ENCODE measurements at regions of chr4 and their contacts with region 1.

Region 1: GRCh38 chr4:145732895-145733880 is 53.2 kb downstream of the C4orf51 start:
- DNase-seq: peak; percentile 93 to 94
- ATAC-seq: peak; percentile 40 to 44
- H3K4me3 ChIP-seq: peak overlapping the region; percentile 62 to 75 (median 70)
- H3K27ac ChIP-seq: peak overlapping the region; percentile 92 to 98 (median 96)
- H3K4me1 ChIP-seq: peaks cover 52 to 58% of the 10 kb centered on the region in 2 donors
- H3K27me3 ChIP-seq: no peaks in the 10 kb centered on the region
- CTCF ChIP-seq: peak in 1 of 5 experiments; percentile 26
- POLR2A ChIP-seq: peak; percentile 84 to 87

Region 2: DNA sequence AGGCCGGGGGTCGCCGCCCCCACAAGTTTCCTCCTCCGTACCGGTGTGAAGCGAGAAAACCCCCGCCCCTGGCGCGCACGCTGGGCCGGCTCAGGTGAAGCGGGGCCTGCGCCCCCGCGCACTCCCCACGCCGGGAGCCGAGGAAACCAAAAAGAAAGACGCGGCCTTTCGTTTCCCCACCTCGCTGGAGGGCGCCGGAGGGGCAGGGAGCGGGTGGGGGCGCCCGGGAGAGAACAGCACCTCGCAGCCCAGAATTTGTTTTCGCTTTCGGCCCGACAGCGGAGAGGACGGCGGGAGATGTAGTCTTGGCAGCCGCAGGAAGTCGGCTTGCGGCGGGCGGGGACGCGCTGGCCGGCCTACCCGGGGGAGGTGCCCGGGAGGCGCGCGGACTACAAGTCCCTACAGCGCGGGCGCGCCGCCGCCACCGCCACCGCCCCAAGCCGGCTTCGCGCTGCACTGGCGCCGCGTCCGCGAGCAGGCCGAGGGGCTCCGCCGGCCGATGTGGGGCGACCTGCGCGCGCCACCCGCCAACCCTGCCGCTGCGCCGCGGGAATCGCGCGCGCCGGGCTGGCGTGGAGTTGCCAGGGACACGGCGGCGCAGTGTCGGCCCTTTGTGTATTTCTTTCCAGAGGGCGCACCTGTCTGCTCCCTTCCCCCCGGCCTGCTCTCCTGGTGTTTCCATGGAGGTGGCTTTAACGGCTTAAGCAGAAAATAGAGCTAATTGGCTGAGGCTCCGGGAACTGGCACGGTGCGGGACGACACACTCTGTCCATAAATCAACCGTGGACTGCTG is 552.7 kb before region 1 on chr4 and contains the start of gene OTUD4:
- in situ Hi-C with region 1: no loop called
- intact Hi-C with region 1: loop called (anchors 1 kb)
- DNase-seq: peak; percentile 94 to 96
- ATAC-seq: peak; percentile 71 to 76
- H3K4me3 ChIP-seq: peak within 1 kb of the TSS; percentile 63 to 95 (median 87)
- H3K27ac ChIP-seq: peak within 1 kb of the TSS; percentile 97 to 99 (median 98)
- H3K4me1 ChIP-seq: peaks cover 26 to 43% of the 10 kb centered on the region in 2 donors
- H3K27me3 ChIP-seq: no peaks in the 10 kb centered on the region
- CTCF ChIP-seq: peak in 3 of 5 experiments; percentile 15 to 23 (median 18)
- POLR2A ChIP-seq: peak; percentile 86 to 87
- total RNA-seq, gene OTUD4: 32.6 to 61.1 (median 47.9) TPM

Region 3: DNA sequence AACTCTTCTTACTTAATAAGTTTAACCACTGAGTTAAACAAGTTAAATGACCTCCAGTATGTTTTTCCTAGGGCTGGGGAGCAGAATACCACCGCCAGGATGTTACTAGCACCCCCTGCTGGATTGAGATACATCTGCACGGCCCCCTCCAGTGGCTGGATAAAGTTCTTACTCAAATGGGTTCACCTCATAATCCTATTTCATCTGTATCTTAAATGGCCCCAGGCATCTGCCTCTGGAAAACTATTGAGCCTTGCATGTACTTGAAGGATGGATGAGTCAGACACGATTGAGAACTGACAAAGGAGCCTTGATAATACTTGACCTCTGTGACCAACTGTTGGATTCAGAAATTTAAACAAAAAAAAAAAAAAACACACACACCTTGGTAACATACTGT is 175.5 kb before region 1 on chr4:
- in situ Hi-C with region 1: no loop called
- intact Hi-C with region 1: no loop called
- DNase-seq: peak in 1 of 2 donors; percentile 52
- ATAC-seq: peak; percentile 42 to 81
- H3K4me3 ChIP-seq: no peak overlapping the region
- H3K27ac ChIP-seq: no peak overlapping the region
- H3K4me1 ChIP-seq: no peaks in the 10 kb centered on the region
- H3K27me3 ChIP-seq: no peaks in the 10 kb centered on the region
- CTCF ChIP-seq: peak; percentile 76 to 88 (median 77)
- POLR2A ChIP-seq: no peak

Region 4: DNA sequence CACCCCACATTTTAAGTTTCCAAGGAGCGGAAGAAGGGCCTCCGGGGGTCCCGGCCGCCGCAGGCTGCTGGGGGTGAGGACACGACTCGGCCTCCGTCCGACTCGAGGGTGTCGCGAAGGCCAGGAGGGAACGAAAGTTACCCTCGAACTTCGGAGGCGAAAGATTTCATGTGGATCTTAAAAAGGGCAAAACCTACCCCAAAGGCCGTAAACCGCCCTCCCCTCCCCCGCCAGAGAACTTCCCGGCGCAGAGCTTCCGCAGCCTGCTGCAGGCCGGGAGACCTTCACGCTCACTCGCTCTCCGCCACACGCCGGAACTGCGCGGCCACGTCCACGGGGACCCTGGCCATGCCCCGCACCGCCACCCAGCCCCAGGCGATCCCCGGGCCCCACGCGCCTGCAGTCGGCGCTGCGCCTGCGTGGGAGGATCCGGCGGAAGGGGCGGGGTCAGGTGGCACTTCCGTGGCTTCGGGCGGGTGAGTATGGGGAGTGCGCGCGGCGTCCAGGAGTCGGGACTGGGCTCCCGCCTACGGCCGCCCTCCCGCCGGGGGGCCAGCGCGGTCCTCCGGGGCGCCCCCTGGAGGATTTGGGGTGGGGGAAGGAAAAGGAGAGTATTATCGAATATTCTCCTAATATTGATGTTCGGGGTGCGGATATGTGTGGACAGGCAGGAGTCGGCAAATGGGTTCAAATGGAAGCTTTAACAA is 114.1 kb before region 1 on chr4 and contains the start of gene MMAA:
- in situ Hi-C with region 1: no loop called
- intact Hi-C with region 1: loop called (anchors 2 kb)
- DNase-seq: peak; percentile 93 to 94
- ATAC-seq: peak; percentile 92 to 95
- H3K4me3 ChIP-seq: peak within 1 kb of the TSS; percentile 72 to 98 (median 88)
- H3K27ac ChIP-seq: peak within 1 kb of the TSS; percentile 92 to 99 (median 98)
- H3K4me1 ChIP-seq: peaks cover 16 to 24% of the 10 kb centered on the region in 2 donors
- H3K27me3 ChIP-seq: no peaks in the 10 kb centered on the region
- CTCF ChIP-seq: peak; percentile 35 to 76 (median 63)
- POLR2A ChIP-seq: peak; percentile 96 to 97
- total RNA-seq, gene MMAA: 5.1 to 10.9 (median 8.4) TPM

Region 5: DNA sequence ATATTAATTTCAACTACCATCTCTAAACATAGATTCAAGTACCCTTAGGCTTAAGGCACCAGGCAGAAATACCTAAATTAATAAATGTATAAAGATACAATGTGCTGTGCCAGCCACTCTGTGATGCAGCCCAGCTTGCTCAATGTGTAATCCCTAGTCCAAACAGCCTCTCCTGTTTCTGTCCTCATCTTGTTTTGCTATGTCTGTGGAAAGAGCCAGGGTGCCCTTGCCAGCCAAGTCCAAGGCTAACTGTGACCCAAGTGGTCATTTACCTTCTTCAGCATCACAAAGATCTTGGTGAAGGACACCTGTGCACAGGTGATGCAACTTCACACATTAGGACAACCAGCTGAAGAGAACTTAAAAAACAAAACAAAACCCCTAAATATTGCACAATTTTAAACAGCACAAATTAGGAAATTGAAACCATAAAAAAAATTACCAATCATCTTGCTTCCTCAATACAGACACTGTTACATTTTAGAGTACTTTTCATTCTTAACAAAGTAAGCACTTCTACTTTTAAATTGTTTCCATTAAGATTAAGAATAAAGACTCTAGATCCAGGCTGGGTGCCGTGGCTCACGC is 36.4 kb after region 1 on chr4:
- in situ Hi-C with region 1: no loop called
- intact Hi-C with region 1: loop called (anchors 2 kb)
- DNase-seq: peak in 1 of 2 donors; percentile 63
- ATAC-seq: peak; percentile 81 to 83
- H3K4me3 ChIP-seq: no peak overlapping the region
- H3K27ac ChIP-seq: peak overlapping the region; percentile 11 to 52 (median 32)
- H3K4me1 ChIP-seq: peaks cover 6 to 19% of the 10 kb centered on the region in 2 donors
- H3K27me3 ChIP-seq: no peaks in the 10 kb centered on the region
- CTCF ChIP-seq: no peak
- POLR2A ChIP-seq: no peak

Region 6: DNA sequence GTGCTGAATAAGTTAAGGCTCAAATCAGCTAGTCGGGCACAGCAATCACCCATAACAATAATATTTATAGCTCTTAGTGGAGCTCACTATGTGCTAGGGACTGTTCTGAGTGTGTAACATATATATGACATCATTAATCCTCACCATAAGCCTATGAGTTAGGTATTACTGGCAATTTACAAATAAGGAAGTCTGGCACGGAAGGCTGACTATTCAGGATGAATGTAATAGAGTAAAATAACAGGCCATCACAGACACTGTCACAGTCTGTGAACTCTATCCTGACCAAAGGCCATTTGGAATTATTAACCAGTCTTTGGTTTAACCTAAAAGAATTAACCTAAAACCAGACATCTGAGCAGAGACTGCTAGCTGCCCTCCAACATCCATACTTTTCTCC is 66.0 kb after region 1 on chr4:
- in situ Hi-C with region 1: loop called in 1 of 4 experiments (anchors 10 kb)
- intact Hi-C with region 1: loop called (anchors 1 kb)
- DNase-seq: no peak
- ATAC-seq: no peak
- H3K4me3 ChIP-seq: no peak overlapping the region
- H3K27ac ChIP-seq: peak overlapping the region; percentile 82 to 90 (median 86)
- H3K4me1 ChIP-seq: peaks cover 45 to 48% of the 10 kb centered on the region in 2 donors
- H3K27me3 ChIP-seq: no peaks in the 10 kb centered on the region
- CTCF ChIP-seq: no peak
- POLR2A ChIP-seq: no peak

Region 7: DNA sequence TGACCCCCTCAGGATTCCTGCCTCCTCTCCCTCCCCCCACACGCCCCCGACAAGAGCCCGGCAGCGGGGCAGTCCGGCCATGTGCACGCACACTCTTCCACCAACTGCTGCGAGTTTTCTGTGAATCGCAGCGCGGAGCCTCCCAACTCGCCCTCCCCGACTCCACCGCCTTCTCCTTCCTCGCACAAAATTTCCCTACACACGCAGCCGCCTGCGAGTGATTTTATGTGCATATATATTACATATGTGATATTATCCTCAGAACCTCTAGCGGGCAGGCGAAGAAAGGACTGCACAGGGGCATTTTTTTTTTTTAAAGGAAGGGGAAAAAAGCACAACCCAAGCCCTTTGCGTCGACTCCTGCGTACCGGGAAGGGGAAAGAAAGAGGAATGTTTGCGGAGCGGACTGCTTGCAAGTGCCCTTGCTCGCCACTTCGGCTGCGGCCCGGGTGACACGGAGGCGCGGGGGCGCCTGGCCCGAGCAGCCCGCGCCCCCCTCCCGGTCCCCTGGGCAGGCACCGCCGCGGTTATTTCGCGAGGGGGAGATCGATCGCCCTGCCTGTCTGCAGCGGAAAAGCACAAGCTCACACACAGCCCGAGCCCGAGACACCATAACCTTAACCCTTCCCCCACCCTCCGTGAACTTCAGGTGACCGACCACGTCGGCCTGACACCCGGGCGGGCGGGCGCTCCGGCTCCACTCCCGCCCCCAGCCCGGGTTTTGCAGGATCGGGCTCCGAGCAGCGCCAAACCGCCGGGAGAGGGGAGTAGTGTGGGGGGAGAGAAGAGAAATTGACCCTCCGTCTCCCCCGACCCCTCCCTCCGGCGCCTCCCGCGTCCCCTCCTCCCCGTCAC is 203.2 kb after region 1 on chr4:
- in situ Hi-C with region 1: loop called in 2 of 4 experiments (anchors 10 to 25 kb)
- intact Hi-C with region 1: loop called (anchors 5 kb)
- DNase-seq: peak; percentile 56 to 79
- ATAC-seq: peak; percentile 67 to 73
- H3K4me3 ChIP-seq: peak overlapping the region; percentile 71 to 90 (median 84)
- H3K27ac ChIP-seq: peak overlapping the region; percentile 91 to 99 (median 94)
- H3K4me1 ChIP-seq: peaks cover 25 to 34% of the 10 kb centered on the region in 2 donors
- H3K27me3 ChIP-seq: no peaks in the 10 kb centered on the region
- CTCF ChIP-seq: peak in 4 of 5 experiments; percentile 23 to 41 (median 34)
- POLR2A ChIP-seq: peak in 1 of 2 donors; percentile 53

Region 8: DNA sequence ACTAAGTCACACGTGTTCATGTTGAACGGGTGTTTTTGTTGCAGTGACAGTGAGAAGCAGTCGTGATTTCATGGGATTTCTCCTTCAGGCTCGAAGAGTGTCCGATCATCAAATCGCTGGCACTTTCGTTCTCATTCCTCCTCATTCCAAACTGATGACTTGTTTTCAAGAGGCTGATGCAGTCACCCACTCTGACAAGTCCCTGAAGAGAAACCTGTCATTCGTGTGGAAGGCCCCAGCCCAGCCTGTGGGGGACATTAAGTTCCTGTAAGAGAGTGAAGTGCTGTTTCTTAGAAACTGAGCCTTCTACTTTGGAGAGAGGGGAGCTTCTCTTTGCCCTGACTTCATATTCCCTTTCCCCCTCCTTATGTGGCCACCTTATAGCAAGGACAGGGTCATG is 489.1 kb after region 1 on chr4:
- in situ Hi-C with region 1: no loop called
- intact Hi-C with region 1: no loop called
- DNase-seq: no peak
- ATAC-seq: no peak
- H3K4me3 ChIP-seq: no peak overlapping the region
- H3K27ac ChIP-seq: no peak overlapping the region
- H3K4me1 ChIP-seq: no peaks in the 10 kb centered on the region
- H3K27me3 ChIP-seq: no peaks in the 10 kb centered on the region
- CTCF ChIP-seq: no peak
- POLR2A ChIP-seq: no peak